MCF 10A (cell line): ENCODE measurements at regions of chrX and their contacts with region 1.

Region 1: GRCh38 chrX:153947009-153947769 is 2.7 kb upstream of the RENBP start:
- DNase-seq: peak; percentile 84
- H3K4me3 Mint-ChIP-seq: no peak overlapping the region
- H3K27ac Mint-ChIP-seq: no peak overlapping the region
- H3K4me1 Mint-ChIP-seq: no peaks in the 10 kb centered on the region
- H3K27me3 Mint-ChIP-seq: no peaks in the 10 kb centered on the region
- CTCF ChIP-seq: peak; percentile 92

Region 2: GRCh38 chrX:153582896-153583295 is 364.3 kb before region 1 on chrX:
- CTCF ChIA-PET with region 1: no interaction called
- POLR2A ChIA-PET with region 1: no interaction called
- intact Hi-C with region 1: no loop called
- DNase-seq: no peak
- H3K4me3 Mint-ChIP-seq: no peak overlapping the region
- H3K27ac Mint-ChIP-seq: no peak overlapping the region
- H3K4me1 Mint-ChIP-seq: no peaks in the 10 kb centered on the region
- H3K27me3 Mint-ChIP-seq: no peaks in the 10 kb centered on the region
- CTCF ChIP-seq: no peak

Region 3: GRCh38 chrX:153763989-153764755 is 183.0 kb before region 1 on chrX and contains the start of gene PLXNB3:
- CTCF ChIA-PET with region 1: interaction called, 51 read pairs
- POLR2A ChIA-PET with region 1: interaction called, 3 read pairs
- intact Hi-C with region 1: loop called (anchors 2 kb)
- DNase-seq: peak; percentile 79
- H3K4me3 Mint-ChIP-seq: peak within 1 kb of the TSS; percentile 81
- H3K27ac Mint-ChIP-seq: peak within 1 kb of the TSS; percentile 75
- H3K4me1 Mint-ChIP-seq: peaks cover 6% of the 10 kb centered on the region
- H3K27me3 Mint-ChIP-seq: no peaks in the 10 kb centered on the region
- CTCF ChIP-seq: peak; percentile 60
- total RNA-seq, gene PLXNB3: 7.2 and 13.5 TPM in 2 replicates

Region 4: DNA sequence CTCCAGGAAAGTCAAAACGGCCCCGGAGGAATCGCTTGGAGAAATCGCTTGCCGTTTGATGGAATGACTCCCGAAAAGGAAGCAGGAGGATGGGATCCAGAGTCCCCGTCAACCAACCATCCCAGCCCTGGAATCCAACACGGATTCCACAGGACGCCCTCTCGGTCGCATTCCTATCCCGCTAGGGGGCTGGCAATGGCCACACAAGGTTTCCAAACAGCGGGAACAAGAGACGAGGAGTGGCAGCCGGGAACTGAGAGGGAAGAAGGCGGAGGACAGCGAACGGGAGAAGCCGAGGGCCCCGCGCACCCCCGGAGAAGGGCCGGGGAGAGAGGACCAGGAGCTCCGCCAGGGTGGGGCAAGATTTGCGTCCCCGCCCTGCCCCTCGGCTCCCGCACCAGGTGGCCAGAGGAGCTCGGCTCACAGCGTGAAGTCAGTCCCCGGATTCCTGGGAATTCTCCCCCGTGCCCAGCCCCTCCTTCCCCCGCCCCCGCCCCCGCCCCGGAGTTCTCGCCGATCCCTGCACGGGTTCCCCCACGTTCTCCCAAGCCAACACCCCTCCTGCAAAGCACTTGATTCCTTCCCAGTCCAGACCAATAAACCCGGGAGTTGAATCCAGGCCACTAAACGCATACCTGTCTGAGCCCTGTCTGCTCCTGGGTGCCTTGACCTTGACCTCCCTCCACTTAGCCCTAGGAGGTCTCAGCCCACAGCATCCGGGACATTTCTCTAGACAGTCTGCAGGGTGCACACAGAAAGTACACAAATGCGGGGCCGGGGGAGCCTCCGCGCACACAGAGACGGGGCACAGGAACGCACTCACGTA is 118.3 kb before region 1 on chrX:
- CTCF ChIA-PET with region 1: no interaction called
- POLR2A ChIA-PET with region 1: no interaction called
- intact Hi-C with region 1: no loop called
- DNase-seq: no peak
- H3K4me3 Mint-ChIP-seq: no peak overlapping the region
- H3K27ac Mint-ChIP-seq: no peak overlapping the region
- H3K4me1 Mint-ChIP-seq: no peaks in the 10 kb centered on the region
- H3K27me3 Mint-ChIP-seq: peaks cover 70% of the 10 kb centered on the region
- CTCF ChIP-seq: no peak

Region 5: DNA sequence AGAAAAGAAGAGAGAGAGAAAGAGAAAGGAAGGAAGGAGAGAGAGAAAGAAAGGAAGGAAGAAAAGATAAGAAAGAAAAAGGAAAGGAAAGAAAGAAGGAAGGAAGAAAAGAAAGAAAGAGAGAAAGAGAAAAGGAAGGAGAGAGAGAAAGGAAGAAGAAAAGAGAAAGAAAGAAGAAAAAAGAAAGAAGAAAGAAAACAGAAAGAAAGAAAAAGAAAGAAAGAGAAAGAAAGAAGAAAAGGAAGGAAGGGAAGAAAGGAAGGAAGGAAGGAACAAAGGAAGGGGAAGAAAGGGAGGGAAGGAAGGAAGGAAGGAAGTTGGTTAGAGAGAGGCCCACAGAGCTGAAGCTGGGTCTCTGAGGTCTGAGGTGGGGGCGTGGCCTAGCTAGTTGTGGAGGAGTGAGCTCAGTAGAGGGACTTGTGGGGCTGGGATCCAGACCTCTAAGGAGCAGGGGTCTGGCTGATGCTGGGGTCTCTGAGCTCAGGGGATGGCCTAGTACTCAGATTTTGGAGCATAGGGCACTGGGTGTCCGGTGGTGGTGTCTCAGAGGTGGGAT is 89.8 kb before region 1 on chrX:
- CTCF ChIA-PET with region 1: no interaction called
- POLR2A ChIA-PET with region 1: no interaction called
- intact Hi-C with region 1: no loop called
- DNase-seq: no peak
- H3K4me3 Mint-ChIP-seq: no peak overlapping the region
- H3K27ac Mint-ChIP-seq: no peak overlapping the region
- H3K4me1 Mint-ChIP-seq: no peaks in the 10 kb centered on the region
- H3K27me3 Mint-ChIP-seq: peaks cover 73% of the 10 kb centered on the region
- CTCF ChIP-seq: no peak

Region 6: DNA sequence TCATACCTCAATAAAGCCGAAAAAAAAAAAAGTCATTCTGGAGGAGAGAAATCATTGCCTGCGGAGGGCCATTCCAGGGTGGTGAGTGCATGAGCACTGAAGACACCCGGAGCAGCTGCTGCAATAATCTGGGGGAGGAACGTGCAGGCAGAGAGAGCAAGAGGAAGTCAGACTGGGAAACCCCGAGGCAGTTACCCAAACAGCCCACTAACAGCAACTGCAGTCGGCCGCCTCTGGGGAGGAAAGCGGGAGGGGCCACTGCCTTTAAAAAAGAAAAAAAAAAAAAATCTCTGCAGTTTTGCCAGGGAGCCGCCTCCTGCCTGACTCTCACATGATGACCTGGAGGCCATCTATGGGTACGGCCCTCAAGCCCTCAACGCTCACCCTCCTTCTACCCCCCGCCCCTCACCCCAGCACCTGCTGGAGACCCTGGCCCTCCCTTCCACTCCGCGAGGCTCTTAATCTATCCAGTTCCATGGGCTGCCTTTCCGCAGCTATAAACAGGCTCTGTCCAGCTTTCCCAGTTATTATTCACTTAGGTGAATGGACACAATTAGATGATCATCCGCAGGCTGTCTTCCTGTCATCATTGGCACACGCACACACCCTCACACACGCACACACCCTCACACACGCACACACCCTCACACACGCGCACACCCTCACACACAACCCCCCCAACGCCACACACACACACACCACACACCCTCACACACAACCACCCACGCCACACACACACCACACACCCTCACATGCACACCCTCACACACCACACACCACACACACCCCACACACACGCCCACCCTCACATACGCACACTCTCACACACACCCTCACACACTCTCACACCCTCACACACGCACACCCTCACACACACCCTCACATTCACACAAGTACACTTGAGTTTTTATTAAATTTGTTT is 46.1 kb before region 1 on chrX:
- CTCF ChIA-PET with region 1: no interaction called
- POLR2A ChIA-PET with region 1: no interaction called
- intact Hi-C with region 1: loop called (anchors 1 kb)
- DNase-seq: peak; percentile 76
- H3K4me3 Mint-ChIP-seq: peak overlapping the region; percentile 35
- H3K27ac Mint-ChIP-seq: peak overlapping the region; percentile 12
- H3K4me1 Mint-ChIP-seq: peaks cover 12% of the 10 kb centered on the region
- H3K27me3 Mint-ChIP-seq: peaks cover 58% of the 10 kb centered on the region
- CTCF ChIP-seq: no peak

Region 7: DNA sequence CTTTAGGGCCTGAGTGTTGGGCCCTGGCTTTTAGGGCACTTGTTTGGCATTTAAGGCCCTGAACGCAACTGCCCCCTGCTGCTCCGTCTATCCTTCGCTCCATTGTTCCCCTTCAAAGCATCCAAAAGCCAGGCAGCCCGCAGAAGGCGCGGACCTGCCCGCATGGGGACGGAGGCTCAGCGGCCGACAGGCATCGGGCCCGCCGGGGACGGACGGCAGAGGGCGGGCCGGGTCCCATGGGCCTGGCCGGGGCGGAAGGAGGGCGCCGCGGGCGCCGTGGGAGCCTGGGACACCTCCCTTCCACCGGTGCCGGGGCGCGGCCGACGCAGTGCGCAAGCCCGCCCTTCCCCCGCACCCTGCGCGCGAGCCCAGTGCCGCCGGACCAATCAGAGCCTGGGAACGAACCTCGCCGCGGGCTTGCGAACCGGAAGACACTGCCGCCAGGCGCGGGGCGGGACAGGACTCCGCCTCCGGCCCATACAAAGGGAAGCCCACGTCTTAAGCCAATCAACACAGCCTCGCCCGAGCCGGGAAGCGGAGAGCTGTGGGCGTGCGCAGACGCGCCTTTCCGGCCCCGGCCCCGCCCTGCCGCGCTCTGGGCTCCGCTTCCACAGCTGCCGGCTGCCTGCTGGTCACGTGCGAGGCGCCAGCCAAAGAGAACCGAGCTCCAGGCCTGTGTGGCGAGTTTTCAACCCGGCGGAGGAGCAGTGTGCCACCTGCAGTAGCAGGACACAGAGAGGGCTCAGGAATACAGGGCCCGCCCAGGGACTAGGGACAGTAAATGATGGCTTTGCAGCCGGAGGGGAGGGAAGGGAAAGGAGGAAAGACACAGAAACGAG is 19.0 kb before region 1 on chrX:
- CTCF ChIA-PET with region 1: interaction called, 21 read pairs
- POLR2A ChIA-PET with region 1: interaction called, 8 read pairs
- intact Hi-C with region 1: no loop called
- DNase-seq: peak; percentile 95
- H3K4me3 Mint-ChIP-seq: peak overlapping the region; percentile 79
- H3K27ac Mint-ChIP-seq: peak overlapping the region; percentile 74
- H3K4me1 Mint-ChIP-seq: peaks cover 1% of the 10 kb centered on the region
- H3K27me3 Mint-ChIP-seq: no peaks in the 10 kb centered on the region
- CTCF ChIP-seq: peak; percentile 10

Region 8: DNA sequence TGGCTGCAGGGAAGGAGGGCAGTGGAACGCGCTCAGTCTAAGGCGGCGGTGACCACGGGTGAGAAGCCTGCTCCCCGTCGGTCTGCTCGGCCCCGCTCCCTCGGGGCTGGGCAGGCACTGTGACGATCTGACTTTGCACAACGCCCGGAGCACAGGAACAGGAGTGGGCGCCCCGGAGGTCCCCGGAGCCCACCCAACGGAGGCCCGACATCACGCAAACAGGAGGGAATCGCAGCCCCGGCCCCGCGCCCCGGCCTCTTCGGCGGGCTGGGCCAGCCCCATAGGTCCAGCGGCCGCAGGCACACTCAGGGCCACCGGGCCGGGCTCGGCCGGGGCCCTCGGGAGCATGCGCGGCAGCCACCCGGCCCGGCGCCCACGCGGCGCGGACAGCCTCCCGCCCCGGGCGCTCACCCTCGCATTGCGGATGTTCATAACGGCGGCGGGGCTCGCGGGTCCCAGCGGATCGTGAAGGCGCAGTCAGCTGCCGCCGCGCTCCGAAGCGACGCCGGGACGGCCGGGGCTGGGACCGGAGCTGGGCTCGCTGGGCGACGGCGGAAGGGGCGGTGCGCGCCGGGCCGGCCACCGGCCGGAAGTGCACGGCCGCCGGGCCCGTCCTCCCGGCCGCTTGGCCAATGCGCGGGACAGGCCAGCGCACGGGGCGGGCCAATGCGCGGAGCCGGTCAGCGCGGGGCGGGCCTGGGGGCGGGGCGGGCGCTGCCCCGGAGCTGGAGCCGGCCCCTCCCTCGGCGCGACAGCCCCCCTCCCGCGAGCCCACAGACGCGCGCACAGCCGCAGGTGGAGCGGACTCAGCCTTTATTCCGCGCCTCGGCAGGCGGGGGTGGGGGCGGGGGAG is 12.5 kb before region 1 on chrX and contains the start of gene NAA10:
- CTCF ChIA-PET with region 1: interaction called, 15 read pairs
- POLR2A ChIA-PET with region 1: interaction called, 4 read pairs
- intact Hi-C with region 1: no loop called
- DNase-seq: peak; percentile 63
- H3K4me3 Mint-ChIP-seq: peak within 1 kb of the TSS; percentile 76
- H3K27ac Mint-ChIP-seq: no peak within 1 kb of the TSS
- H3K4me1 Mint-ChIP-seq: no peaks in the 10 kb centered on the region
- H3K27me3 Mint-ChIP-seq: peaks cover 28% of the 10 kb centered on the region
- CTCF ChIP-seq: no peak
- total RNA-seq, gene NAA10: 166 and 196 TPM in 2 replicates

Region 9: DNA sequence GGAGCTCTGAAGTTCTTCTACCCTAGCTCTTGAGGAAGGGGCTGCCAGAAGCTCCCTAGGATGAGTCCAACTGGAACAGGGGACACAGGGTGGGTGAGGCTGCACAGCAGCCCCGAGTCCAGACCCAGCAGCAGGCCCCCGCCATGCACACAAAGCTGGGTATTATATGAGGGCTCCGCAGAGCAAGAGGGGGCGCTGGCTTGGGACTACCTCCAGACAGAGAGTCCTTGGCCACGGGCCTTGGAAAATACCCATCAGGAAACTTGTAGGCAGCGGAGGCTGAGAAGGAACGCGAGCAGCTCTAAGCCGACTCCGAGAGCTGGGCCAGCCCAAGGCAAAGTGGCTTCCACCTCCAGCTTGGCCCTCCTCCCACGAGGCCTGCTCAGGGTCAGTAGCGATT is 16.4 kb after region 1 on chrX:
- CTCF ChIA-PET with region 1: interaction called, 50 read pairs
- POLR2A ChIA-PET with region 1: interaction called, 3 read pairs
- intact Hi-C with region 1: no loop called
- DNase-seq: no peak
- H3K4me3 Mint-ChIP-seq: no peak overlapping the region
- H3K27ac Mint-ChIP-seq: no peak overlapping the region
- H3K4me1 Mint-ChIP-seq: peaks cover 13% of the 10 kb centered on the region
- H3K27me3 Mint-ChIP-seq: no peaks in the 10 kb centered on the region
- CTCF ChIP-seq: no peak